ENCODE measurements at regions of chr10 and their contacts with region 1.

Region 1: DNA sequence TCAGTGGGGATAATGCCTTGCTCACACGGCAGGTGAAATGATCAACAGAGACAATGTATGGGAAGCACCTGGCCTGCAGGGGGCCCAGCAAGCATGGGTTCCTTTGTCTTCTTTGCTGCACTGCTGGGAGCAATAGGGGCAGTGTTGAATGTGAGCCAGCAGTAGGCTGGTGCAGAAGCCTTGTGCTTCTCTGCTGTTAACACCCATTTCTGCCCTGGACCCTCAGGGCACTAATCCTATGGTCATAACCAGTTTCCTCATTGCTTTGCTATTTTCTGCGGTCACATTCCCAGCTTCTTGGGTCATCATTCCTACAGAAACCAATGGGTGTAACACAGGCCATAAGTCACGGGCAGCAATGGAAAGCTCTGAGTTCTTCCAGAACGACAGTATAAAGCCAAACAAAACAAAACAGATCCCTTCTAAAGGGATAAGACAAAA is 10.9 kb upstream of the LGI1 start:
- DNase-seq: peak; percentile 66 to 80
- H3K4me3 ChIP-seq: no peak overlapping the region
- H3K27ac ChIP-seq: no peak overlapping the region
- H3K4me1 ChIP-seq: peaks cover 9 to 30% (median 24%) of the 10 kb centered on the region in 4 experiments
- H3K27me3 ChIP-seq: no peaks in the 10 kb centered on the region
- CTCF ChIP-seq: peak; percentile 57 to 73 (median 67)
- EP300 ChIP-seq: no peak
- POLR2A ChIP-seq: no peak
- RAD21 ChIP-seq: peak; percentile 52 to 66

Region 2: DNA sequence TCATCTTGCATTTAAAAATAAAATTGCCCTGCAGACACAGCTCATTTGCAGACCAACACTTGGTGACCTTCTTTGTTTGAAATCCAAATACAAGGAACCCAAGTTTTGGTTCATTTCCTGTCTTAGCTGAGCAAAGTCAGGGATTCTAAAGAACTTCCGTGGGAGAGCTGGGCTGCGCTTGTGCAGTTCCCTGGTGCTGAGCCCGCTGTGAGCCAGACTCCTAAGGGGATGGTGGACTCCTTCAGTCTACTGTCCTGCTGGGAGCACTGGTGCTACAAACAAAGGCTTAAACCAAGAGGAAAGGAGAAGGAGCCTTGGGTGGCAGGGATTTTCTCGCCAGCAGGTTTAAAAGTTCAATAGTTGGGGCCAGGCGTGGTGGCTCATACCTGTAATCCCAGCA is 324.7 kb before region 1 on chr10:
- CTCF ChIA-PET with region 1: no interaction called
- POLR2A ChIA-PET with region 1: no interaction called
- DNase-seq: no peak
- H3K4me3 ChIP-seq: no peak overlapping the region
- H3K27ac ChIP-seq: no peak overlapping the region
- H3K4me1 ChIP-seq: peaks cover 2 to 13% (median 6%) of the 10 kb centered on the region in 4 experiments; a peak in 6 of 7 replicates
- H3K27me3 ChIP-seq: no peaks in the 10 kb centered on the region
- CTCF ChIP-seq: no peak
- EP300 ChIP-seq: no peak
- POLR2A ChIP-seq: no peak
- RAD21 ChIP-seq: no peak

Region 3: DNA sequence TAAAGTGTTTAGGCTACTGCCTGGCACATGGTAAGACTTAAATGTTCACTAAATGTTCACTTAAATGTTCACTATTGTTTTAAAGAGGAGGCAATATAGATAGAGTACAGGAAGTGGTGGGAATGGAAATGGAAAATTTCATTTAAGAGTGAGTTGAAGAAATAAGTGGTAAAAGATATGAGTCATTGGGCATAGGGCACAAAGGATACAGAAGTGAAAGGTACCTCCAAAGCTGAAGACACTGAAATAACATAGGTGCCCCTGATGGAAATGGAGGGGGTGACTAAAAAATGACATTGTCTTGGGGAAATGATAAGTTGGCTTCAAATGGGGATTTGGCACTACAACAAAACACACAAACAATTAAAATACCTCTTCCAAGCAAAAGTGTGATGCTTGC is 39.2 kb before region 1 on chr10:
- CTCF ChIA-PET with region 1: interaction called, 27 read pairs
- POLR2A ChIA-PET with region 1: interaction called, 3 read pairs
- DNase-seq: no peak
- H3K4me3 ChIP-seq: no peak overlapping the region
- H3K27ac ChIP-seq: no peak overlapping the region
- H3K4me1 ChIP-seq: no peaks in the 10 kb centered on the region
- H3K27me3 ChIP-seq: no peaks in the 10 kb centered on the region
- CTCF ChIP-seq: no peak
- EP300 ChIP-seq: no peak
- POLR2A ChIP-seq: no peak
- RAD21 ChIP-seq: no peak

Region 4: DNA sequence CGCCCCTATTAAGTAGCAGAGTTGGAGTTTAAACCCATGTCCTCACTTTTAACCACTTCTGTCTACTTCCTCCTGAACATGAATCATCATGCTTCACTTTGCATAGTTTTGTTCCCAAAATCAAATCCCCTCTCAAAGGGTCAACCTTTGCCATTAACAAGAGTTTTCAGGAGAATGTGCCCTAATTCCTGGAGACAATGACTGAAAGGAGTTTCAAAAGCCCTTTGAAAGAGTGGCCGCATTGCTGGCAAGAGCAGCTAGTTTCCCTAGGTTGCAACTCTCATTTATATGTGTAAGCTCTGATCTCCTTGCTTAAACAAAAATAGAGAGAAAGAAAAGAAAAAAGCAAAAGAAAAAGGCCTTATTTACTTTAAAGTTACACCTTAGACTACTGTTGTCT is 20.1 kb after region 1 on chr10:
- CTCF ChIA-PET with region 1: interaction called, 20 read pairs
- POLR2A ChIA-PET with region 1: interaction called, 4 read pairs
- DNase-seq: no peak
- H3K4me3 ChIP-seq: no peak overlapping the region
- H3K27ac ChIP-seq: no peak overlapping the region
- H3K4me1 ChIP-seq: peaks cover 0 to 6% (median 0%) of the 10 kb centered on the region in 4 experiments; a peak in 2 of 7 replicates
- H3K27me3 ChIP-seq: no peaks in the 10 kb centered on the region
- CTCF ChIP-seq: no peak
- EP300 ChIP-seq: no peak
- POLR2A ChIP-seq: no peak
- RAD21 ChIP-seq: no peak

Region 5: DNA sequence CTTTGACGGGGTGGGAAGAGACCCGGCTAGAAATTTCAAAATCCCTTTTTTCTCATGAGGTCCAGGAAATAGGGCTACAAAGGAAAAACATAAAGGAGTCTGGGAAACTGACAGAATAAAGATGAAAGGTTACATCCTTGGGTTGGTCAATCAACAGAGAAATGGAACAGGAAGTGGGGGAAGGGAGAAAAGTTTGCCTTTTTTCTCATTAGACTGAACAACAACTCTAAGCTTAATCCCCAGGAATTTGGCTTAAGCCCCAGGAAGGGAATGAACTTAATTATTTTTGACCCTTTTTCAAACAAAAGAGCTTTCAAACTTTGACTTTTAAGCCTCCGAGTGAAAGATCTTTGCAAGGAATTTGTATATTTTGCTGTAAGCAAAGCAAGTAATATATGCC is 43.6 kb after region 1 on chr10:
- CTCF ChIA-PET with region 1: interaction called, 91 read pairs
- POLR2A ChIA-PET with region 1: interaction called, 3 read pairs
- DNase-seq: no peak
- H3K4me3 ChIP-seq: peak overlapping the region in 1 of 4 experiments; percentile 16; a peak in 1 of 8 replicates
- H3K27ac ChIP-seq: no peak overlapping the region
- H3K4me1 ChIP-seq: peaks cover 0 to 11% (median 5%) of the 10 kb centered on the region in 4 experiments; a peak in 3 of 7 replicates
- H3K27me3 ChIP-seq: no peaks in the 10 kb centered on the region
- CTCF ChIP-seq: no peak
- EP300 ChIP-seq: no peak
- POLR2A ChIP-seq: no peak
- RAD21 ChIP-seq: no peak

Region 6: DNA sequence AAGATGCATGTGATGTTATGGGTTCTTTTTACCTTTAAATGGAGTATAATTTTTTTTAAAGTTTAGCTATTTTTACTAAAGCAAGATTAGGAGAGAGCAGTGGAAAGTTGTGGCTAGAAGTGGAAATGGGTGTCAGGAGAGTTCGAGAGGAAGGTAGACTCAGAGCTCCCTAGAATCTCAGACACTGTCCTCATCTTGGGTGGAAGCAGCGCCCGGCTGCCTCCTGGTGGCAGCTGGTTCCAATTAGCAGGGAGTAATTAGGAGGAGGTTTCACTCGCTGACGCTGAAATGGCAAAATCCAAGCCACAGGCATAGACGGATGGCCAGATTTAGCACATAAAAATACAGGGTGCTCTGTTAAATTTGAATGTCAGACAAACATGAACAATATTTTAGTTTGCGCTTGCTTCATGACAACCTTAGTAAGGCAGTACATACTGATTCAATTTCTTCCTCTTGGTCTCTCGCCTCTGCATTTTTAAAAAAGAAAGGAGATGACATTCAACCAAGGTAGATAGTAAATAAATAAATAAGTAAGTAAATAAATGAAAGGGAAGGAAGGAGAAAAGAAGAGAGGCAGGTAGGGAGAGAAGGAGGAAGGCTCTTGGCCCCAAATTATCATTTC is 69.4 kb after region 1 on chr10:
- CTCF ChIA-PET with region 1: interaction called, 287 read pairs
- POLR2A ChIA-PET with region 1: interaction called, 3 read pairs
- DNase-seq: peak; percentile 21 to 62
- H3K4me3 ChIP-seq: no peak overlapping the region
- H3K27ac ChIP-seq: no peak overlapping the region
- H3K4me1 ChIP-seq: peaks cover 0 to 2% (median under 1%) of the 10 kb centered on the region in 4 experiments; a peak in 2 of 7 replicates
- H3K27me3 ChIP-seq: no peaks in the 10 kb centered on the region
- CTCF ChIP-seq: peak; percentile 77 to 86 (median 82)
- EP300 ChIP-seq: no peak
- POLR2A ChIP-seq: no peak
- RAD21 ChIP-seq: peak; percentile 78 to 85

Region 7: GRCh38 chr10:93916257-93917063 is 169.6 kb after region 1 on chr10:
- CTCF ChIA-PET with region 1: interaction called, 13 read pairs
- POLR2A ChIA-PET with region 1: no interaction called
- DNase-seq: no peak
- H3K4me3 ChIP-seq: peak overlapping the region in 1 of 4 experiments; percentile 3; a peak in 2 of 8 replicates
- H3K27ac ChIP-seq: no peak overlapping the region
- H3K4me1 ChIP-seq: peaks cover 0 to 2% (median 0%) of the 10 kb centered on the region in 4 experiments; a peak in 1 of 7 replicates
- H3K27me3 ChIP-seq: no peaks in the 10 kb centered on the region
- CTCF ChIP-seq: peak in 2 of 3 experiments; percentile 34 to 58; a peak in 2 of 4 replicates
- EP300 ChIP-seq: no peak
- POLR2A ChIP-seq: no peak
- RAD21 ChIP-seq: peak; percentile 56 to 62

Measured in H1 (cell line).